ENCODE measurements at regions of chr12 and their contacts with region 1.

Region 1: DNA sequence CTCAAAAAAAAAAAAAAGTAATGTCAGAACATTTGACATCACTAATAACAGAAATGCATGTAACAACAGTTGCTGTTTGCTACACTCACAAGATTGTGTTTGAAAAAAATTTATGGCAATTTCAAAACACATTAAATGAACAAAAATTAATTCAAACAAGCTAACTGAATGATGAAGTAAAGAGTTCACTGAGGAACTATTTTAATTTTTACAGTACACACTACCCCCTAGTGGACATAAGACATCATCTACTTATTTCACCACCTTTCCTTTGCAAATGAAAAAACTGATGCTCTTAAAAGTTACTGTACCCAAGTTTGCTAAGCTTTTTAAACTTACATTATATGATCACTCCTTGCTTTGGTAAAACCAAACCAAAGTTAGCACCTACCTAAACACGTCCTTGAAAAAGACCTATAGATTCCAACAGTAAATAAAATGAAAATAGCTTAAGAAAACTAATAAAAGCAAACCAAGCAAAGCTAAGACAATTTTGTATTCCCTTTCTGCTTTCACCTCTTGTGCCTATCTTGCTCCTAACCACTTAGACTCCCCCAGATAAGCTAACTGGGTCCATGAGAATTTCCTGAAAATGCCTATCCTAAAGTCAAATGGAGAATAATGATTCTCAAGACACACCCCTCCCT is 22.2 kb downstream of the UBE2N start:
- DNase-seq: no peak
- ATAC-seq: peak; percentile 54
- H3K4me3 ChIP-seq: no peak overlapping the region
- H3K27ac ChIP-seq: no peak overlapping the region
- H3K4me1 ChIP-seq: peaks cover 83% of the 10 kb centered on the region
- H3K27me3 ChIP-seq: no peaks in the 10 kb centered on the region
- CTCF ChIP-seq: peak; percentile 48 to 58 (median 54); a peak in 5 of 6 replicates
- EP300 ChIP-seq: no peak
- POLR2A ChIP-seq: no peak
- RAD21 ChIP-seq: peak; percentile 46; the same call in 1 of the 2 replicates

Region 2: DNA sequence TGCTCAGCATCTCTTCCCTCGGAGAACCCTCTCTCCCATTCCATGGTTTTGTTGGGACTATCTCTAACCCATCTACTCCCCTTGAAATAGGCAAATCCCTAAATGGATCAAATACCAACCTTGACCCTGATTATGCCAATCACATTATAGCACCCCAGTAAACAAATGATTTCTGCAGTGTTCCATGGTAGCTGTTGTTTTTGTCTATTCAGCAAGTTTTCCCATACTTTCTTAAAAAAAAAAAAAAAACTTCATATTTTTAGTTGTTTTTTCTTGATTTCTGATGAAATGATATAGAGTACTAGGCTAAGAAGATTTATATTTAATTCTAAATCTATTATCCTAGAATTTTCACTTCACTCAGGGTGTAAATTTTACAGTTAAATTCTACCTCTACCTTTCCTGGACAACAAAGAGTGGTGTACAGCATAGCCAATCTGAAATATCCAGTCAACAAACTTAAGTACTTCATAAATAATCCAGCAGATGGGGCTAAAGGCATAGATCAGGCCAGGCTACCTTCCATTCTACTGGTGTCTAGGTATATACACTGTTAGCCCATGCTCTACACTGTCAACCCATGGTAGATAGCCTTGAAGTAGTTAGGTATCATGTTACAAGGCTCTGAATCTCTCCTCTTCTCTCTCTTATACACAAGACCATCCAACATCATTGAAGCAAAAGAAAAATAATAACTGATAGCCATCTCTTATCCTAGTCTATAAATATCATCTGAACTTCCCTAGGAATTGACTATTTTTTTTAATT is 634.5 kb before region 1 on chr12:
- CTCF ChIA-PET with region 1: interaction called, 37 read pairs
- POLR2A ChIA-PET with region 1: no interaction called
- RAD21 ChIA-PET with region 1: interaction called, 26 read pairs
- SMC1A ChIA-PET with region 1: interaction called, 13 read pairs
- in situ Hi-C with region 1: no loop called
- intact Hi-C with region 1: loop called (anchors 5 kb)
- DNase-seq: peak; percentile 70
- ATAC-seq: peak; percentile 99
- H3K4me3 ChIP-seq: no peak overlapping the region
- H3K27ac ChIP-seq: no peak overlapping the region
- H3K4me1 ChIP-seq: peaks cover 2% of the 10 kb centered on the region; the same call in 1 of the 2 replicates
- H3K27me3 ChIP-seq: no peaks in the 10 kb centered on the region
- CTCF ChIP-seq: peak; percentile 51 to 84 (median 57); a peak in 5 of 6 replicates
- EP300 ChIP-seq: no peak
- POLR2A ChIP-seq: no peak
- RAD21 ChIP-seq: peak; percentile 97

Region 3: DNA sequence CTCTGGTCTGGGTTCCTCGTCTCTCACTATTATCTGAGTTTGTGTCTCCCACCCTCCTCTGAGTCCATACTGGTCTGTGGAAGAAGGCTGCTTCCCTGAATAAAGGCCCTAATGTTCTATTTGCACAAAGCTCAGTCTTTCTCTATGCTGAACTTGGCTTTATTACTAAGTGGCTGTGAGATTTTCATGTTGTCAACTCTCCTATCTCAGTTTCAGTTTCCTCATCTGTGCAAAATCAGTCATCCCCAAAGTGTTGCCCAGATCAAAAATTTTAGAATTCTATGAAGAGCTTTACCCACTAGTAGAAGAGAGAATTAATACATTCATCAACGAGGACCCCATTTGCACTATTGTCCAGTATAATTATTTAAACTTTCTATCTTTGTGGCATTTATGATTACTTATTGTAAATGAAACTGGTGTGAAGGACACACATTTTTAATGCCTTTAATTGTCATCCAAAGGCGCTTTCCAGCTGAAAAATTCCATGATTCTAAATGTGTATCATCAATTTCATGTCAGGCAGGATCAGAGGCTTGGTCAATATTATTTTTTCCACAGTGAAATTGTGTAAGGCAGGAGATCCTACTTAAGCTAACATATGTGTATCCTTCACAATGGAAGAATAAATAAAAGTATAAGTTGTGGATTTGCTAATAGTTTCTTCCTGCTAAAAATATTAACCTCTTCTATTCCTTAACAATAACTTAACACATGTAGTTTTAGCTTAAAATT is 411.3 kb before region 1 on chr12:
- CTCF ChIA-PET with region 1: interaction called, 12 read pairs
- POLR2A ChIA-PET with region 1: interaction called, 3 read pairs
- RAD21 ChIA-PET with region 1: interaction called, 24 read pairs
- SMC1A ChIA-PET with region 1: interaction called, 26 read pairs
- in situ Hi-C with region 1: no loop called
- intact Hi-C with region 1: no loop called
- DNase-seq: no peak
- ATAC-seq: peak; percentile 92
- H3K4me3 ChIP-seq: no peak overlapping the region
- H3K27ac ChIP-seq: peak overlapping the region; percentile 45
- H3K4me1 ChIP-seq: peaks cover 36% of the 10 kb centered on the region
- H3K27me3 ChIP-seq: no peaks in the 10 kb centered on the region
- CTCF ChIP-seq: no peak
- EP300 ChIP-seq: no peak
- POLR2A ChIP-seq: no peak
- RAD21 ChIP-seq: no peak

Region 4: GRCh38 chr12:93387780-93388179 is 31.7 kb before region 1 on chr12:
- CTCF ChIA-PET with region 1: interaction called, 66 read pairs
- POLR2A ChIA-PET with region 1: no interaction called
- RAD21 ChIA-PET with region 1: interaction called, 36 read pairs
- SMC1A ChIA-PET with region 1: interaction called, 36 read pairs
- in situ Hi-C with region 1: no loop called
- intact Hi-C with region 1: no loop called
- DNase-seq: no peak
- ATAC-seq: peak; percentile 76
- H3K4me3 ChIP-seq: peak overlapping the region; percentile 6
- H3K27ac ChIP-seq: peak overlapping the region; percentile 35; the same call in 1 of the 2 replicates
- H3K4me1 ChIP-seq: peaks cover 27% of the 10 kb centered on the region
- H3K27me3 ChIP-seq: no peaks in the 10 kb centered on the region
- CTCF ChIP-seq: no peak
- EP300 ChIP-seq: no peak
- POLR2A ChIP-seq: no peak
- RAD21 ChIP-seq: no peak

Region 5: GRCh38 chr12:93434256-93434865 is 14.8 kb after region 1 on chr12:
- CTCF ChIA-PET with region 1: interaction called, 163 read pairs
- POLR2A ChIA-PET with region 1: interaction called, 65 read pairs
- RAD21 ChIA-PET with region 1: interaction called, 145 read pairs
- SMC1A ChIA-PET with region 1: interaction called, 86 read pairs
- in situ Hi-C with region 1: no loop called
- intact Hi-C with region 1: no loop called
- DNase-seq: no peak
- ATAC-seq: no peak
- H3K4me3 ChIP-seq: peak overlapping the region; percentile 66
- H3K27ac ChIP-seq: peak overlapping the region; percentile 81
- H3K4me1 ChIP-seq: peaks cover 34% of the 10 kb centered on the region
- H3K27me3 ChIP-seq: no peaks in the 10 kb centered on the region
- CTCF ChIP-seq: no peak
- EP300 ChIP-seq: no peak
- POLR2A ChIP-seq: no peak
- RAD21 ChIP-seq: no peak

Region 6: GRCh38 chr12:93502802-93503623 is 83.5 kb after region 1 on chr12:
- CTCF ChIA-PET with region 1: interaction called, 6 read pairs
- POLR2A ChIA-PET with region 1: no interaction called
- RAD21 ChIA-PET with region 1: interaction called, 3 read pairs
- SMC1A ChIA-PET with region 1: interaction called, 10 read pairs
- in situ Hi-C with region 1: no loop called
- intact Hi-C with region 1: no loop called
- DNase-seq: no peak
- ATAC-seq: peak; percentile 58
- H3K4me3 ChIP-seq: no peak overlapping the region
- H3K27ac ChIP-seq: no peak overlapping the region
- H3K4me1 ChIP-seq: peaks cover 5% of the 10 kb centered on the region; the same call in 1 of the 2 replicates
- H3K27me3 ChIP-seq: no peaks in the 10 kb centered on the region
- CTCF ChIP-seq: peak; percentile 64 to 73 (median 72)
- EP300 ChIP-seq: no peak
- POLR2A ChIP-seq: no peak
- RAD21 ChIP-seq: peak; percentile 84